ENCODE measurements at regions of chr7 and their contacts with region 1.

Region 1: GRCh38 chr7:101244375-101245146 is at the start of gene FIS1:
- DNase-seq: peak; percentile 97
- ATAC-seq: peak; percentile 93
- H3K4me3 ChIP-seq: peak within 1 kb of the TSS; percentile 95 to 100 (median 99)
- H3K4me3 Mint-ChIP-seq: peak within 1 kb of the TSS; percentile 98
- H3K27ac ChIP-seq: peak within 1 kb of the TSS; percentile 91 to 97
- H3K27ac Mint-ChIP-seq: peak within 1 kb of the TSS; percentile 97
- H3K4me1 ChIP-seq: peaks cover 13 to 31% of the 10 kb centered on the region in 2 donors
- H3K4me1 Mint-ChIP-seq: peaks cover 41% of the 10 kb centered on the region
- H3K27me3 ChIP-seq: no peaks in the 10 kb centered on the region
- H3K27me3 Mint-ChIP-seq: no peaks in the 10 kb centered on the region
- CTCF ChIP-seq: peak; percentile 98
- total RNA-seq, gene FIS1: 95.5 and 105 TPM in 2 replicates

Region 2: GRCh38 chr7:100611974-100612729 is 632.4 kb before region 1 on chr7 and contains the start of gene MOSPD3:
- CTCF ChIA-PET with region 1: no interaction called
- POLR2A ChIA-PET with region 1: no interaction called
- intact Hi-C with region 1: loop called (anchors 2 kb)
- DNase-seq: peak; percentile 99
- ATAC-seq: peak; percentile 91
- H3K4me3 ChIP-seq: peak within 1 kb of the TSS; percentile 53 to 93 (median 84)
- H3K4me3 Mint-ChIP-seq: peak within 1 kb of the TSS; percentile 93
- H3K27ac ChIP-seq: peak within 1 kb of the TSS; percentile 82
- H3K27ac Mint-ChIP-seq: peak within 1 kb of the TSS; percentile 99
- H3K4me1 ChIP-seq: peaks cover 13 to 19% of the 10 kb centered on the region in 2 donors
- H3K4me1 Mint-ChIP-seq: peaks cover 18% of the 10 kb centered on the region
- H3K27me3 ChIP-seq: no peaks in the 10 kb centered on the region
- H3K27me3 Mint-ChIP-seq: no peaks in the 10 kb centered on the region
- CTCF ChIP-seq: no peak
- total RNA-seq, gene MOSPD3: 17.3 and 18.8 TPM in 2 replicates

Region 3: GRCh38 chr7:100889761-100890634 is 354.6 kb before region 1 on chr7:
- CTCF ChIA-PET with region 1: interaction called, 8 read pairs
- POLR2A ChIA-PET with region 1: interaction called, 5 read pairs
- intact Hi-C with region 1: loop called (anchors 2 kb)
- DNase-seq: peak; percentile 94
- ATAC-seq: peak; percentile 82
- H3K4me3 ChIP-seq: peak overlapping the region in 4 of 5 experiments; percentile 57 to 80 (median 72)
- H3K4me3 Mint-ChIP-seq: peak overlapping the region; percentile 87
- H3K27ac ChIP-seq: no peak overlapping the region
- H3K27ac Mint-ChIP-seq: peak overlapping the region; percentile 82
- H3K4me1 ChIP-seq: peaks cover 43 to 54% of the 10 kb centered on the region in 2 donors
- H3K4me1 Mint-ChIP-seq: peaks cover 48% of the 10 kb centered on the region
- H3K27me3 ChIP-seq: peaks cover 0 to 46% (median 12%) of the 10 kb centered on the region in 4 experiments
- H3K27me3 Mint-ChIP-seq: peaks cover 22% of the 10 kb centered on the region
- CTCF ChIP-seq: no peak

Region 4: GRCh38 chr7:101138213-101138870 is 106.2 kb before region 1 on chr7:
- CTCF ChIA-PET with region 1: interaction called, 65 read pairs
- POLR2A ChIA-PET with region 1: no interaction called
- intact Hi-C with region 1: no loop called
- DNase-seq: peak; percentile 62
- ATAC-seq: peak; percentile 86
- H3K4me3 ChIP-seq: no peak overlapping the region
- H3K4me3 Mint-ChIP-seq: peak overlapping the region; percentile 74
- H3K27ac ChIP-seq: no peak overlapping the region
- H3K27ac Mint-ChIP-seq: peak overlapping the region; percentile 77
- H3K4me1 ChIP-seq: peaks cover 0 to 7% of the 10 kb centered on the region in 2 donors
- H3K4me1 Mint-ChIP-seq: peaks cover 13% of the 10 kb centered on the region
- H3K27me3 ChIP-seq: peaks cover 0 to 12% (median 5%) of the 10 kb centered on the region in 4 experiments
- H3K27me3 Mint-ChIP-seq: peaks cover 31% of the 10 kb centered on the region
- CTCF ChIP-seq: peak; percentile 72

Region 5: DNA sequence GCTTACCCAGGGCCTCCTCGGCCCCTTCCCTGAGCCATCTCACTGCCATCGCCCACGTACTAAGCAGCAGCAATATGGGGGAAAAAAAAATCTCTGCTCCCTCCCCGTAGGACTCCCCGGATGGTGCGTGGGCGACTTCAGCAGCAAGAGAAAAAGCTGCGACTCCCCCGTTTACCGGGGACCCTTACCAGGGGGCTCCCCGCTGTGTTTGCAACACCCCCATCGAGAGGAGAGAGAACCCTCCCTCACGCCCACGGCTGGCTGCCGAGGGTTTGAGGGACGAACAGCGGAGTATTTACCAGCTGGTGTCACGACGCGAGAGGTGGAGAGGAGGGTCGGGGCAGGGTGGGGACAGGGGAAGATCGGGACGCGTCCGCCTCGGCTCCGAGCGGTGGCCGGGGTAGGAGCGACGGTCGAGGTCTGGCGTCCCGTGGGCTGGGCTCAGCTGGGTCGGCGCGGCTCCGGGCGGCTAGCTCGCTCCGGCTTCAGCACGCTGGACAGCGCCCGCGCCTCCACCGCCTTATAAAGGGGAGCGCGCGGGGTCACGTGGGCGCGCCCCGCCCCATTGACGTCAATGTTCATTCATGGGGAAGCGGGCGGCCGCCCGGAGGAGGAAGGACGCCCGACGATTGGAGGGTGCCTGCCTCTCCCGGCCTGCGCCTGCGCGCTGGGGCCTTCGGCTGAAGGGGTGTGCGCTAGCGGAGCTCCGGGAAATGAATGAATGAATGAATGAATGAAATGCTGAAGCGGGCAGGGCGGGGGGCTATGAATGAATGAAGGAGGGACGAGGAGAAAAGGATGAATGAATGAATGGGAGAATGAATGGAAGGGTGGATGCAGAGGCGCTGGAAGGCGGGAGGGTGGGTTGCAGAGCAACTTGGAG is 79.2 kb before region 1 on chr7 and contains the start of gene VGF:
- CTCF ChIA-PET with region 1: no interaction called
- POLR2A ChIA-PET with region 1: interaction called, 3 read pairs
- intact Hi-C with region 1: loop called (anchors 1 kb)
- DNase-seq: peak; percentile 95
- ATAC-seq: peak; percentile 83
- H3K4me3 ChIP-seq: peak within 1 kb of the TSS in 3 of 5 experiments; percentile 0 to 58 (median 17)
- H3K4me3 Mint-ChIP-seq: peak within 1 kb of the TSS; percentile 82
- H3K27ac ChIP-seq: no peak within 1 kb of the TSS
- H3K27ac Mint-ChIP-seq: peak within 1 kb of the TSS; percentile 81
- H3K4me1 ChIP-seq: peaks cover 56 to 67% of the 10 kb centered on the region in 2 donors
- H3K4me1 Mint-ChIP-seq: peaks cover 42% of the 10 kb centered on the region
- H3K27me3 ChIP-seq: peaks cover 0 to 79% (median 55%) of the 10 kb centered on the region in 4 experiments
- H3K27me3 Mint-ChIP-seq: peaks cover 51% of the 10 kb centered on the region
- CTCF ChIP-seq: no peak
- total RNA-seq, gene VGF: 0.12 and 0.17 TPM in 2 replicates

Region 6: GRCh38 chr7:101217388-101218235 is 26.9 kb before region 1 on chr7 and contains the starts of genes PLOD3 and ZNHIT1:
- CTCF ChIA-PET with region 1: interaction called, 38 read pairs
- POLR2A ChIA-PET with region 1: interaction called, 15 read pairs
- intact Hi-C with region 1: loop called (anchors 1 kb)
- DNase-seq: peak; percentile 98
- ATAC-seq: peak; percentile 80
- H3K4me3 ChIP-seq: peak within 1 kb of the TSS; percentile 85 to 99 (median 94)
- H3K4me3 Mint-ChIP-seq: peak within 1 kb of the TSS; percentile 97
- H3K27ac ChIP-seq: peak within 1 kb of the TSS; percentile 44 to 75
- H3K27ac Mint-ChIP-seq: peak within 1 kb of the TSS; percentile 95
- H3K4me1 ChIP-seq: peaks cover 18 to 21% of the 10 kb centered on the region in 2 donors
- H3K4me1 Mint-ChIP-seq: peaks cover 25% of the 10 kb centered on the region
- H3K27me3 ChIP-seq: no peaks in the 10 kb centered on the region
- H3K27me3 Mint-ChIP-seq: no peaks in the 10 kb centered on the region
- CTCF ChIP-seq: peak; percentile 6
- total RNA-seq, gene PLOD3: 47.5 and 47.9 TPM in 2 replicates
- total RNA-seq, gene ZNHIT1: 37.3 and 38.4 TPM in 2 replicates

Region 7: GRCh38 chr7:101321491-101322401 is 77.2 kb after region 1 on chr7 and contains the start of gene IFT22:
- CTCF ChIA-PET with region 1: no interaction called
- POLR2A ChIA-PET with region 1: interaction called, 4 read pairs
- intact Hi-C with region 1: loop called (anchors 2 kb)
- DNase-seq: peak; percentile 93
- ATAC-seq: peak; percentile 97
- H3K4me3 ChIP-seq: peak within 1 kb of the TSS; percentile 68 to 91 (median 82)
- H3K4me3 Mint-ChIP-seq: peak within 1 kb of the TSS; percentile 95
- H3K27ac ChIP-seq: peak within 1 kb of the TSS; percentile 22 to 89
- H3K27ac Mint-ChIP-seq: peak within 1 kb of the TSS; percentile 93
- H3K4me1 ChIP-seq: peaks cover 13 to 16% of the 10 kb centered on the region in 2 donors
- H3K4me1 Mint-ChIP-seq: peaks cover 16% of the 10 kb centered on the region
- H3K27me3 ChIP-seq: no peaks in the 10 kb centered on the region
- H3K27me3 Mint-ChIP-seq: no peaks in the 10 kb centered on the region
- CTCF ChIP-seq: no peak
- total RNA-seq, gene IFT22: 7.3 and 10.3 TPM in 2 replicates

Region 8: DNA sequence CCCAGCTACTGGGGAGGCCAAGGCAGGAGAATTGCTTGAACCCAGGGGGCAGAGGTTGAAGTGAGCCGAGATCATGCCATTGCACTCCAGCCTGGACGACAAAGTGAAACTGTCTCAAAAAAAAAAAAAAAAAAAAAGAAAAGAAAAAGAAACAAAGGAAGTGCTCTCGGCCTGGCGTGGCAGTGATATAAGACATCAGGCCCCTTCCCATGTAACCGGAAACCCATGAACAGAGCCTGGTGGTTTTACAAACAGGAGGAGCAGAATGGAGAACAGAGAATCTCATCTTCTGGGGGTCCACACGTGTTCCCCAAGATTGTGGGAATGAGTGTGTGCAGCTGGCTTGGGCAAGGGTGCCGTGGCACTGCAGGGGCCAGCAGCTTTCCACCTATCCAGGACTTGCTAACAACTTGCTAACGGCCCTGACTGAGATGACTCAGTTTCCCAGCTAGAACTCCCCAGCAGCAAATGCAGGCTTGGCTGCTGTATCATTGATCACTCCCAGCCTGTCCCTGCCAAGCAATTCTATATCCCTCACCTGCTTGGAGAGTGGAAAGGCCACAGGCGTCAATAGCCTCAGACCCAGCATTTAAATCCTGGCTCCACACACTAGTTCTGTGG is 221.1 kb after region 1 on chr7:
- CTCF ChIA-PET with region 1: no interaction called
- POLR2A ChIA-PET with region 1: no interaction called
- intact Hi-C with region 1: no loop called
- DNase-seq: peak; percentile 28
- ATAC-seq: no peak
- H3K4me3 ChIP-seq: no peak overlapping the region
- H3K4me3 Mint-ChIP-seq: peak overlapping the region; percentile 56
- H3K27ac ChIP-seq: no peak overlapping the region
- H3K27ac Mint-ChIP-seq: peak overlapping the region; percentile 50
- H3K4me1 ChIP-seq: peaks cover 4 to 10% of the 10 kb centered on the region in 2 donors
- H3K4me1 Mint-ChIP-seq: peaks cover 6% of the 10 kb centered on the region
- H3K27me3 ChIP-seq: no peaks in the 10 kb centered on the region
- H3K27me3 Mint-ChIP-seq: peaks cover 7% of the 10 kb centered on the region
- CTCF ChIP-seq: no peak

Measured in B cell (primary cell).